ENCODE measurements at regions of chr5 and their contacts with region 1.

Region 1: GRCh38 chr5:170186156-170186555 is 46.6 kb upstream of the C5orf58 start:
- DNase-seq: no peak
- H3K4me3 ChIP-seq: no peak overlapping the region
- H3K27ac ChIP-seq: no peak overlapping the region
- H3K4me1 ChIP-seq: no peaks in the 10 kb centered on the region
- H3K27me3 ChIP-seq: peaks cover 0 to 9% (median 0%) of the 10 kb centered on the region in 4 donors
- CTCF ChIP-seq: no peak
- POLR2A ChIP-seq: no peak

Region 2: DNA sequence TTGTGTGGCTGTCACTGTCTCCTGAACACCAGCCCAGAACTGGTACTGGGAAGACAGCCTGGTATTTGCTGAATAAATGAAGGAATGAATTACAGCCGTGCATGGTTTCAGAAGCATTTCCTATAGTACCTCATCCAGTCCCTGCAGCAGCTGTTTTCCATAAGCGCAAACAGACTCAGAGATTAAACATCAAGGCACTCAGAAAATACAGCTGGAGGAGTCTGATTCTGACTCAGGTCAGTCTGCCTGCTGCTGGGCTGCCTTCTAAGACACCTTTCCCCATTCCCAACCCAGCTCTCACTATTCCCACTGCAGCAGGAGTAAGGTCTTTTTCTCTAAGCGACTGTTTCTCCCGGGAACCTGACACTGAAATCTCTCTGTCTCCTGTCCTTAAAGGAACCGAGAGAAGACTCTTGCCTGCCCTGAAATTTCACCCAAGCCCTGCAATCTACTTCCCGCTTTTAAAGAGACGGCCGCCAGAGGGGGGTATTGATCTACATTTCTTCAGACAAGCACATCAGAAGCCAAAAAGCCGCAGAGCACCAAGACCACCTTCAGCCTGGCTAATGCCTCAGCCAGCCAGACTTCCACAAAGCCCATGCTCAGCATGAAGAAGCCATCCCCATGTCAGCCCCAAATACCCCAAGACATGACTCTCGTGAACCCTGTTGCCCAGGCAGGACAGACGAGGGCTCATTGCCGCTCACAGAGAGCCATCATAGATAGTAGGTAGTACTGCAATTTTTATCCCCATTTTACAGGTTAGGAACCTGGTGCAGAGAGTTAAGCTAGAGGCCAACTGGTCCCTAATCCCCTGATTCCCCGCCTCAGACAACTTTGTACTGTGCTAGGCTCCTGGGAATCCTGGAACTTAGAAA is 85.9 kb before region 1 on chr5:
- intact Hi-C with region 1: loop called (anchors 5 kb)
- DNase-seq: peak; percentile 2
- H3K4me3 ChIP-seq: no peak overlapping the region
- H3K27ac ChIP-seq: no peak overlapping the region
- H3K4me1 ChIP-seq: no peaks in the 10 kb centered on the region
- H3K27me3 ChIP-seq: peaks cover 0 to 9% (median 0%) of the 10 kb centered on the region in 4 donors
- CTCF ChIP-seq: peak; percentile 59 to 69 (median 62)
- POLR2A ChIP-seq: no peak

Region 3: GRCh38 chr5:170267431-170268152 is 81.4 kb after region 1 on chr5:
- intact Hi-C with region 1: no loop called
- DNase-seq: no peak
- H3K4me3 ChIP-seq: peak overlapping the region in 1 of 4 donors; percentile 24
- H3K27ac ChIP-seq: peak overlapping the region in 3 of 4 donors; percentile 45 to 61 (median 57)
- H3K4me1 ChIP-seq: peaks cover 14 to 41% (median 15%) of the 10 kb centered on the region in 3 donors
- H3K27me3 ChIP-seq: peaks cover 0 to 23% (median 2%) of the 10 kb centered on the region in 4 donors
- CTCF ChIP-seq: peak; percentile 68 to 79 (median 78)
- POLR2A ChIP-seq: no peak